ENCODE measurements at regions of chr17 and their contacts with region 1.

Region 1: DNA sequence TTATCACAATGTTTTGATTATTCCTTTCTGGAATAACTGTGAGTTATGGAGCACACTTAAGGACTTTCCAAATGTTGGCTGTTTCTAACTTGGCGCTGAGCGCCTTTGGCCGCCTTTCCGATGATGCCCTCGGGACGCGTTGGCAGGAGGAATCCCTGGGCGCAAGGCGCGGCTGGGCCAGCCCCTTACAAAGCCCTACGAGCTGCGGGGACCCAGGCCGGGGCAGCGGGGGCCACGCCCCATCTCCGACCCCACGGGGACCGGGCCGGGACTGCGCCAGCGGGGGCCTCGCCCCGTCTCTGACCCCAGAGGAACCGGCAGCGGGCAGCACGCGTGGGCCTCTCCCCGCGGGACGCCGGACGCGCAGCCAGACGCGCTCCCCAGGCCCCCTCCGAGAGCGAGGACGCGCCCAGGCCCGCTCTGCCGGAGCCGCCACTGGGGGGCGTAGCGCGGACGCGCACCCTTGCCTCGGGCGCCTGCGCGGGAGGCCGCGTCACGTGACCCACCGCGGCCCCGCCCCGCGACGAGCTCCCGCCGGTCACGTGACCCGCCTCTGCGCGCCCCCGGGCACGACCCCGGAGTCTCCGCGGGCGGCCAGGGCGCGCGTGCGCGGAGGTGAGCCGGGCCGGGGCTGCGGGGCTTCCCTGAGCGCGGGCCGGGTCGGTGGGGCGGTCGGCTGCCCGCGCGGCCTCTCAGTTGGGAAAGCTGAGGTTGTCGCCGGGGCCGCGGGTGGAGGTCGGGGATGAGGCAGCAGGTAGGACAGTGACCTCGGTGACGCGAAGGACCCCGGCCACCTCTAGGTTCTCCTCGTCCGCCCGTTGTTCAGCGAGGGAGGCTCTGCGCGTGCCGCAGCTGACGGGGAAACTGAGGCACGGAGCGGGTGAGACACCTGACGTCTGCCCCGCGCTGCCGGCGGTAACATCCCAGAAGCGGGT is at the start of gene GAA:
- DNase-seq: peak; percentile 85 to 94 (median 92)
- H3K4me3 ChIP-seq: peak within 1 kb of the TSS; percentile 90
- H3K27ac ChIP-seq: peak within 1 kb of the TSS; percentile 78 to 87
- H3K4me1 ChIP-seq: peaks cover 5% of the 10 kb centered on the region
- H3K27me3 ChIP-seq: no peaks in the 10 kb centered on the region
- CTCF ChIP-seq: peak; percentile 65 to 99 (median 97)
- EP300 ChIP-seq: no peak
- POLR2A ChIP-seq: peak; percentile 65
- total RNA-seq, gene GAA: 17.2 to 77.3 (median 25.6) TPM

Region 2: GRCh38 chr17:80063830-80064585 is 37.3 kb before region 1 on chr17:
- intact Hi-C with region 1: no loop called
- DNase-seq: peak; percentile 55 to 68 (median 64)
- H3K4me3 ChIP-seq: no peak overlapping the region
- H3K27ac ChIP-seq: no peak overlapping the region
- H3K4me1 ChIP-seq: peaks cover 15% of the 10 kb centered on the region
- H3K27me3 ChIP-seq: no peaks in the 10 kb centered on the region
- CTCF ChIP-seq: no peak
- EP300 ChIP-seq: no peak
- POLR2A ChIP-seq: no peak

Region 3: GRCh38 chr17:80147035-80147836 is 46.0 kb after region 1 on chr17 and contains the start of gene EIF4A3:
- intact Hi-C with region 1: loop called in 1 of 4 experiments (anchors 5 kb)
- DNase-seq: peak; percentile 98 to 99 (median 99)
- H3K4me3 ChIP-seq: peak within 1 kb of the TSS; percentile 100
- H3K27ac ChIP-seq: peak within 1 kb of the TSS; percentile 87 to 92
- H3K4me1 ChIP-seq: peaks cover 9% of the 10 kb centered on the region
- H3K27me3 ChIP-seq: no peaks in the 10 kb centered on the region
- CTCF ChIP-seq: no peak
- EP300 ChIP-seq: peak; percentile 96
- POLR2A ChIP-seq: peak; percentile 91
- total RNA-seq, gene EIF4A3: 81.6 to 114 (median 93.6) TPM